Activated T-helper 1 cell treated with anti-CD3 and anti-CD28 coated beads, Interleukin-12 subunit alpha, Interleukin-12 subunit beta, Interleukin-2, Interleukin-4 antibody, amounts not matched to agents 30 ng/mL and 10 ng/mL and 1 ng/mL, durations not matched to agents 14 hours and 24 hours and 36 hours (primary cell): ENCODE measurements at regions of chr17 and their contacts with region 1.

Region 1: GRCh38 chr17:40362696-40363110 is 1.8 kb downstream of the GJD3 start:
- DNase-seq: peak; percentile 85
- H3K4me3 Mint-ChIP-seq: peak overlapping the region; percentile 77
- H3K27ac Mint-ChIP-seq: peak overlapping the region; percentile 84
- H3K4me1 Mint-ChIP-seq: peaks cover 14% of the 10 kb centered on the region
- H3K27me3 Mint-ChIP-seq: peaks cover 1% of the 10 kb centered on the region

Region 2: GRCh38 chr17:40326014-40326831 is 36.5 kb before region 1 on chr17:
- intact Hi-C with region 1: loop called (anchors 2 kb)
- DNase-seq: peak; percentile 41
- H3K4me3 Mint-ChIP-seq: peak overlapping the region; percentile 73
- H3K27ac Mint-ChIP-seq: peak overlapping the region; percentile 95
- H3K4me1 Mint-ChIP-seq: peaks cover 92% of the 10 kb centered on the region
- H3K27me3 Mint-ChIP-seq: no peaks in the 10 kb centered on the region

Region 3: DNA sequence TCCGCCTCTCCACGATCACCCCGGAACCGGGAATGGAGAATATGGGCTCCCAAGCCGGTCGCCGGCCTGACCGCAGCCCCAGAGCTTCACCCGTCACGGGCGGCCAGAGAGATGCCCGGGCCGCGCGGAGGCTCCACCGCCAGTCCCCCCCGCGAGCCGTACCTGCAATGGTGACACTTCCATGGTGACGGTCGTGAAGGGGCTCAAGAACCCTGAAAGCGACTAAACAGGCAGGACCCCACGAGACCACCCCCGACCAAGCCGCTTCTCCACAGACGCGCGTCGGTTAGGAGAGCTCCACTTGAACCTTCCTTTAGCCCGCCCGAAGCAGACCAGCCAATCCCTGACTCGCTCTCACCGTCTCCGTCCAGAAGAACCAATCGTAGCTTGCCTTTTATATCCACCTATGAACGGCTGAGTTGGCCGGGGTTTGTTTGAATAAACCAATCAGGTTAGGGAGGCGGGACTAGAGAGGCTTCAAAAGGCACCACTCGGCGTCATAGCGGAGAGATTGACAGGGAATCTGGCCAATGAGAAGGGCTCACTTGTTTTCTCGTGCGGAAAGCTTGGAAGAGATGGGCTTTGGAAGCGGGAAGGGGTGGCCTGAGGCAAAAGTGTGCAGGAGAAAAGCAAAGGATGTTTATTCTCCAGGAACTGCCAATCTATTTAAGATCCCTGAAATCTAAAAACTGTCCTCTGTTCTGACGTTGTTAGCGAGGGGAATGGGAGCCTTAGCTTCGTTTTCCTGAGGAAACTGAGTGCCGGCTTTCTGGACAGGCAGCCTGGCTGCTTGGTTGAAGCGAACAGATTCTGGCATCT is 55.1 kb after region 1 on chr17 and contains the start of gene TOP2A:
- intact Hi-C with region 1: loop called (anchors 1 kb)
- DNase-seq: peak; percentile 97
- H3K4me3 Mint-ChIP-seq: peak within 1 kb of the TSS; percentile 96
- H3K27ac Mint-ChIP-seq: peak within 1 kb of the TSS; percentile 92
- H3K4me1 Mint-ChIP-seq: peaks cover 35% of the 10 kb centered on the region
- H3K27me3 Mint-ChIP-seq: peaks cover 2% of the 10 kb centered on the region
- total RNA-seq, gene TOP2A: 161 and 174 TPM in 2 replicates

Region 4: GRCh38 chr17:40480501-40481003 is 117.8 kb after region 1 on chr17:
- intact Hi-C with region 1: loop called (anchors 1 kb)
- DNase-seq: peak; percentile 76
- H3K4me3 Mint-ChIP-seq: peak overlapping the region; percentile 84
- H3K27ac Mint-ChIP-seq: peak overlapping the region; percentile 99
- H3K4me1 Mint-ChIP-seq: peaks cover 84% of the 10 kb centered on the region
- H3K27me3 Mint-ChIP-seq: no peaks in the 10 kb centered on the region

Region 5: GRCh38 chr17:40490982-40491381 is 128.3 kb after region 1 on chr17:
- intact Hi-C with region 1: no loop called
- DNase-seq: no peak
- H3K4me3 Mint-ChIP-seq: peak overlapping the region; percentile 35
- H3K27ac Mint-ChIP-seq: peak overlapping the region; percentile 46
- H3K4me1 Mint-ChIP-seq: peaks cover 62% of the 10 kb centered on the region
- H3K27me3 Mint-ChIP-seq: no peaks in the 10 kb centered on the region